Activated CD4-positive, alpha-beta T cell treated with anti-CD3 and anti-CD28 coated beads for 36 hours (primary cell): ENCODE measurements at regions of chr19 and their contacts with region 1.

Region 1: GRCh38 chr19:45405435-45406225 is 761 bp upstream of the PPP1R13L start:
- DNase-seq: peak; percentile 91
- ATAC-seq: peak; percentile 59
- H3K4me3 Mint-ChIP-seq: peak overlapping the region; percentile 95
- H3K27ac Mint-ChIP-seq: peak overlapping the region; percentile 97
- H3K4me1 Mint-ChIP-seq: peaks cover 34% of the 10 kb centered on the region
- H3K27me3 Mint-ChIP-seq: peaks cover 23% of the 10 kb centered on the region

Region 2: GRCh38 chr19:45092747-45093678 is 312.6 kb before region 1 on chr19 and contains the start of gene PPP1R37:
- CTCF ChIA-PET with region 1: no interaction called
- POLR2A ChIA-PET with region 1: no interaction called
- intact Hi-C with region 1: loop called in 1 of 2 experiments (anchors 5 kb)
- DNase-seq: peak; percentile 95
- ATAC-seq: peak; percentile 71
- H3K4me3 Mint-ChIP-seq: peak within 1 kb of the TSS; percentile 89
- H3K27ac Mint-ChIP-seq: peak within 1 kb of the TSS; percentile 97
- H3K4me1 Mint-ChIP-seq: peaks cover 54% of the 10 kb centered on the region
- H3K27me3 Mint-ChIP-seq: no peaks in the 10 kb centered on the region
- total RNA-seq, gene PPP1R37: 12.5 to 14.1 TPM

Region 3: GRCh38 chr19:45391340-45391739 is 14.3 kb before region 1 on chr19:
- CTCF ChIA-PET with region 1: interaction called, 10 read pairs
- POLR2A ChIA-PET with region 1: interaction called, 3 read pairs
- intact Hi-C with region 1: no loop called
- DNase-seq: no peak
- ATAC-seq: peak; percentile 47
- H3K4me3 Mint-ChIP-seq: no peak overlapping the region
- H3K27ac Mint-ChIP-seq: no peak overlapping the region
- H3K4me1 Mint-ChIP-seq: no peaks in the 10 kb centered on the region
- H3K27me3 Mint-ChIP-seq: peaks cover 7% of the 10 kb centered on the region

Region 4: GRCh38 chr19:45469132-45469944 is 63.7 kb after region 1 on chr19:
- CTCF ChIA-PET with region 1: interaction called, 4 read pairs
- POLR2A ChIA-PET with region 1: no interaction called
- intact Hi-C with region 1: loop called in 1 of 2 experiments (anchors 1 kb)
- DNase-seq: peak; percentile 97
- ATAC-seq: peak; percentile 82
- H3K4me3 Mint-ChIP-seq: peak overlapping the region; percentile 78
- H3K27ac Mint-ChIP-seq: peak overlapping the region; percentile 86
- H3K4me1 Mint-ChIP-seq: peaks cover 29% of the 10 kb centered on the region
- H3K27me3 Mint-ChIP-seq: peaks cover 11% of the 10 kb centered on the region

Region 5: GRCh38 chr19:45506246-45506990 is 100.8 kb after region 1 on chr19:
- CTCF ChIA-PET with region 1: no interaction called
- POLR2A ChIA-PET with region 1: no interaction called
- intact Hi-C with region 1: loop called in 1 of 2 experiments (anchors 1 kb)
- DNase-seq: peak; percentile 100
- ATAC-seq: peak; percentile 80
- H3K4me3 Mint-ChIP-seq: peak overlapping the region; percentile 85
- H3K27ac Mint-ChIP-seq: peak overlapping the region; percentile 96
- H3K4me1 Mint-ChIP-seq: peaks cover 38% of the 10 kb centered on the region
- H3K27me3 Mint-ChIP-seq: no peaks in the 10 kb centered on the region

Region 6: GRCh38 chr19:45770192-45771101 is 364.8 kb after region 1 on chr19:
- CTCF ChIA-PET with region 1: no interaction called
- POLR2A ChIA-PET with region 1: no interaction called
- intact Hi-C with region 1: loop called in 1 of 2 experiments (anchors 1 kb)
- DNase-seq: peak; percentile 93
- ATAC-seq: peak; percentile 68
- H3K4me3 Mint-ChIP-seq: peak overlapping the region; percentile 78
- H3K27ac Mint-ChIP-seq: no peak overlapping the region
- H3K4me1 Mint-ChIP-seq: peaks cover 10% of the 10 kb centered on the region
- H3K27me3 Mint-ChIP-seq: peaks cover 10% of the 10 kb centered on the region